ENCODE measurements at regions of chr6 and their contacts with region 1.

Region 1: DNA sequence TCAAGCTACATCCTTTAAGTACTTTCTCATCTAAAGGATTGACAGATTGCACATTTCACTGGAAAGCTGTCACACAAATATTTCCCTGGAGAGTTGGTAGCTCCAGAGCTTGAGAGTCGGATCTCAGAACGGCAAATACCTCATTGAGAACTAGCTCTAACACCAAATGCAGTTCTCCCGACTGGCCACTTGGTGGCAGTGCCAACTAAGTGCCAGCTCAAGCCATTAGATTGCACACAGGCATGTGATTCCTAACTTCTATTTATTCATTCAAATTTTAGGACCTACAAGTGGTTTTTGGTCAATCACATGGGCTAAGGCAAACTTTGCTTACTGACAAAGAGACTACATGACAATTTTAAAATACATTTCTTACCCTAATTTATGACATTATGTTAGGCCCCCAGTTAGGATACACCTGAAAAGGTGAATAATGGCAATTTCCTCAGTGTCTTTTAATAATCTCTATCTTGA is 7.9 kb upstream of the MCHR2 start:
- ATAC-seq: peak in 7 of 8 experiments; percentile 35 to 93 (median 78)
- H3K4me3 ChIP-seq: no peak overlapping the region
- H3K27ac ChIP-seq: no peak overlapping the region
- H3K4me1 ChIP-seq: no peaks in the 10 kb centered on the region

Region 2: GRCh38 chr6:100093405-100093804 is 91.5 kb after region 1 on chr6:
- in situ Hi-C with region 1: loop called in 1 of 9 experiments (anchors 5 kb)
- ATAC-seq: no peak
- H3K4me3 ChIP-seq: no peak overlapping the region
- H3K27ac ChIP-seq: no peak overlapping the region
- H3K4me1 ChIP-seq: no peaks in the 10 kb centered on the region

Region 3: GRCh38 chr6:100479179-100480035 is 477.5 kb after region 1 on chr6:
- in situ Hi-C with region 1: loop called in 1 of 9 experiments (anchors 25 kb)
- ATAC-seq: peak in 5 of 8 experiments; percentile 38 to 75 (median 66)
- H3K4me3 ChIP-seq: no peak overlapping the region
- H3K27ac ChIP-seq: no peak overlapping the region
- H3K4me1 ChIP-seq: no peaks in the 10 kb centered on the region